ENCODE measurements at regions of chrX and their contacts with region 1.

Region 1: GRCh38 chrX:21756785-21757529 is 959 bp downstream of the SMPX start:
- DNase-seq: no peak
- H3K4me3 ChIP-seq: no peak overlapping the region
- H3K27ac ChIP-seq: no peak overlapping the region
- H3K27me3 ChIP-seq: no peaks in the 10 kb centered on the region
- CTCF ChIP-seq: no peak

Region 2: DNA sequence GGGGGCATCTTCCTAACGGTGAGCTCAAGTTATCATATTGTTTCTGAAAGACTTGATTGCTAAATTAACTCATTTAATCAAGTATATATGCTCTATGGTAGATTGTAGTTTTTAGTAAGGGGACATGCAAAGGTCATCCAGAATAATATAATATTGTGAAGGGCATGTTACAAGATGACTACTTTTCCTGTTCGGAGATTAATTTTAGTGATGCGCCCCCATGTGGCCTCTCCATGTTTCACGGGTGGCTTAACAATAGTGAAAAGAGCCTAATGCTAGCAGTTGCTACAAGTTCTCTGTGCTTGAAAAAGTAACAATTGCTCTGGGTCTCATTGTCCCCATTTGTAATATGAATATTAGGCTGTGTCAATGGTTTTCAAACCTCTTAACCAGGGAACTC is 11.2 kb before region 1 on chrX:
- CTCF ChIA-PET with region 1: interaction called, 13 read pairs
- POLR2A ChIA-PET with region 1: no interaction called
- DNase-seq: no peak
- H3K4me3 ChIP-seq: no peak overlapping the region
- H3K27ac ChIP-seq: no peak overlapping the region
- H3K27me3 ChIP-seq: no peaks in the 10 kb centered on the region
- CTCF ChIP-seq: peak; percentile 55

Region 3: DNA sequence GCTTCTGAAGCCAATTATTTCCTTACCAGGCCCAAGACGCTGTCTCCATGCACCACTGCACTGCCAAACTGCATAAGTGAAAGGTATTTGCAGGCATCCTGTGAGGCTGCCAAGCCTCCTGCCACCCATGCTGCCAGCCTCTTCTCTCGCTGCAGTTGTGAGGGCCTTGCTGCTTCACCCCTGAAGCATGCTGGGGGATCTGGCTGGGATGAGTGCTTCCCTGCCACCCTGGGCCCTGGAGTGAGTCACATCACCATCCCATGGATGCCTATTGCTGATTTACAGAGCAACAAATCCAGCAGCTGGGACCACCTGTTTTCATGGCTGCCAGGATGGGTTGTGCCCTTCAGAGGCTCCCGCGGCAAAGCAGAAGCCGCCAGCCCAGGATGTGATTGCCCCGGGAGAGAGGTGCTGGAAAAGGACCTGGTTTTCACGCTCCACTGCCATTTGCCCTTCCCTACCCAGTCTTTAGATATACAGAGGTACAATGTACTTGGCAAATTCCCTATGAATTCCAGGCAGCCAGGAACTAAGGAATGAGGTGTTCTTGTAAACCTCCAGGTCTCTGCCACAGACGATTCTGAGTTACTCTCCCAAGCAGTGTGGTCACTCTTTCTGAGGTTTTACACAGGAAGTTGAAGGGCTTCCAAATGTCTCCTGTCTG is 1536.2 kb after region 1 on chrX:
- CTCF ChIA-PET with region 1: no interaction called
- POLR2A ChIA-PET with region 1: no interaction called
- DNase-seq: no peak
- H3K4me3 ChIP-seq: no peak overlapping the region
- H3K27ac ChIP-seq: no peak overlapping the region
- H3K27me3 ChIP-seq: no peaks in the 10 kb centered on the region
- CTCF ChIP-seq: no peak

Measured in AG04450 (cell line).